ENCODE measurements at regions of chr7 and their contacts with region 1.

Region 1: GRCh38 chr7:139940866-139941265 is 111.8 kb downstream of the TBXAS1 start:
- DNase-seq: no peak
- H3K4me3 ChIP-seq: no peak overlapping the region
- H3K27ac ChIP-seq: no peak overlapping the region
- H3K4me1 ChIP-seq: no peaks in the 10 kb centered on the region
- H3K27me3 ChIP-seq: no peaks in the 10 kb centered on the region
- CTCF ChIP-seq: no peak
- POLR2A ChIP-seq: no peak

Region 2: DNA sequence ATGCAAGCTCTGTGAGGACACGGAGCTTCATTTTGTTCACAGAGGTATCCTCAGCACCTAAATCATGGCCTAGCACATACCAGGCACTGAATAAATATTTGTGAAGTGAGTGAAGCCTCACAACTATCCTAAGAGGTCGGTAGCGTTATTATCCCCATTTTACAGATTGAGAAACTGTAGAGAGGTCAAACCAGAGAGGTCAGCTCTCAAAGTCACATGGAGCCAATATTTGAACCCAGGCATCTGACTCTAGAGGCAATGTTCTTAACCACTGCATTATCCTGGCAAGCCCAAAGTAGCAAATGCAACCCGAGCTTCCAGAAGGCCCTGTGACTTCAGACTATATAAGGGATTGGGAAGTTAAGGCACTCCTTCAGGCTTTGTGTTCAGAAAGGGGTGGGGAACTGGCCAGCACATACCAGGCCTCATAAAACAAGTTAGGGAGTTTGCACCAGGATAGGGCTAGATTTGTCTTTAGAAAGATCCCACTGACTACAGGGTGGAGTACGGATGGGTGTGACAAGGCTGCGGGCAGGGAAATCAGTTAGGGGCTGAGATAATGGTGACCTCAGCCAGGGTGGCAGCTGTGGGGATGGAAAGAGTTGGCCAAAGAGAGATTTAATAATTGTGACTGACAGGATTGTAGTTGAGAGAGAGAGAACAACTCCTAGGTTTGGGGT is 10.4 kb before region 1 on chr7:
- intact Hi-C with region 1: loop called (anchors 1 kb)
- DNase-seq: no peak
- H3K4me3 ChIP-seq: no peak overlapping the region
- H3K27ac ChIP-seq: no peak overlapping the region
- H3K4me1 ChIP-seq: no peaks in the 10 kb centered on the region
- H3K27me3 ChIP-seq: no peaks in the 10 kb centered on the region
- CTCF ChIP-seq: no peak
- POLR2A ChIP-seq: no peak

Measured in vagina (tissue), 2 donors.